H1 (cell line): ENCODE measurements at regions of chr2 and their contacts with region 1.

Region 1: DNA sequence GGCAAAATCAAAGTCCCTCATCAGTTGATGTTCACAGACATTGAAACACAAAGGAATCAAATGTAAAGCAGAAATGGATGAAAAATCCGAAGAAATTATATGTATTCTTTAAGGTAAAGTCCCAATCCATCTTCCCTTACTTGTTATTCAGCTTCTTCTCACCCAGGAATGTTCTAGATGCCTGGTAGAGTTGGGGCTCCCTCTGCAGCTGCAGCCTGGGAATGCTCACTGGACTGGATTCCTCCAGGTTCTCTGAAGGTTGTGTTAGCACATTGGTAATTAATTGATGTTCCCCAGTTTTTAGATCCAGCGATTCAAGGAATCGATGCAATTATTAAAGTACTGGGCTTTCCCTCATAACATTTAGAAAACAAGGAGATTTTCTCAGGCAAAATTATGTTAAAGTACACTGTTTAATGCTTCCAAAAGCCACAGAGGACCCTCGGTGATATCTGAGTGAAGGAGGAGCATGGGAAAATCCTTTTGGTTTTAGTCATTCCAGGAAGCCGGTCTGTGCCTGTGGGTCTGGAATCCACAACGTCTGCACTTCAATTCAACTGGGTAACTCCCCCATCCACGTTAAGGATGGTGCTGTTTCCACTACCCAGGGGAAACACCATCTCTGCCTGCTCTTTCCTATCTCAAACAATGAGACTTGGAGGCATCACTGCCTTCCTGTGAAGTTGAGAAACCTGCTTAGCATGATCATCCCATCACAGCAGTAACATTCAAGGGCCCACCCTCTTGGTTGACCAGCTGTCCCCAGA is 22.0 kb downstream of the NTSR2 start:
- DNase-seq: no peak
- H3K4me3 ChIP-seq: no peak overlapping the region
- H3K27ac ChIP-seq: no peak overlapping the region
- H3K4me1 ChIP-seq: no peaks in the 10 kb centered on the region
- H3K27me3 ChIP-seq: no peaks in the 10 kb centered on the region
- CTCF ChIP-seq: peak; percentile 38 to 55 (median 39)
- EP300 ChIP-seq: no peak
- POLR2A ChIP-seq: no peak
- RAD21 ChIP-seq: peak; percentile 60 to 69

Region 2: GRCh38 chr2:11631462-11631861 is 16.6 kb before region 1 on chr2:
- CTCF ChIA-PET with region 1: interaction called, 11 read pairs
- POLR2A ChIA-PET with region 1: no interaction called
- DNase-seq: no peak
- H3K4me3 ChIP-seq: no peak overlapping the region
- H3K27ac ChIP-seq: no peak overlapping the region
- H3K4me1 ChIP-seq: no peaks in the 10 kb centered on the region
- H3K27me3 ChIP-seq: no peaks in the 10 kb centered on the region
- CTCF ChIP-seq: no peak
- EP300 ChIP-seq: no peak
- POLR2A ChIP-seq: no peak
- RAD21 ChIP-seq: no peak

Region 3: GRCh38 chr2:11663427-11663826 is 15.4 kb after region 1 on chr2:
- CTCF ChIA-PET with region 1: interaction called, 13 read pairs
- POLR2A ChIA-PET with region 1: no interaction called
- DNase-seq: no peak
- H3K4me3 ChIP-seq: no peak overlapping the region
- H3K27ac ChIP-seq: no peak overlapping the region
- H3K4me1 ChIP-seq: no peaks in the 10 kb centered on the region
- H3K27me3 ChIP-seq: peaks cover 0 to 4% (median 2%) of the 10 kb centered on the region in 4 experiments; a peak in 6 of 7 replicates
- CTCF ChIP-seq: no peak
- EP300 ChIP-seq: no peak
- POLR2A ChIP-seq: no peak
- RAD21 ChIP-seq: no peak

Region 4: DNA sequence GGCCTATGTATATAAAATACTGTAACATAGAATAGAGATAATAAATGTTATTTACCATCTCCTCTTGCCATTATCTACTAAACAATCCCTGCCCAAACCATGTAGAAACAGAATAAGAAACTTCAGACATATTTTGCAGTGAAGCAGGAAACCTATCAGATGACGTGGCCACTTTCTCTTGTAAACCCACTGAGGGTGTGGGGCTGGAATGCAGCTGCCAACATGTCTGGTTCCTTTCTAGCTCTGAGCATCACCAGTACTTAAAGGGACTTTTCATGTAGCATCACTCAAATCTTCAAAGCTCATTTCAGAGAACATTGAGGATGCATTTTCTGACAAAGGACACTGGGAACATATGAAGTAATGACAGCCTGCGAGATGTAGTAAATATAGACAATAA is 350.2 kb after region 1 on chr2:
- CTCF ChIA-PET with region 1: no interaction called
- POLR2A ChIA-PET with region 1: no interaction called
- DNase-seq: no peak
- H3K4me3 ChIP-seq: no peak overlapping the region
- H3K27ac ChIP-seq: no peak overlapping the region
- H3K4me1 ChIP-seq: no peaks in the 10 kb centered on the region
- H3K27me3 ChIP-seq: peaks cover 0 to 1% (median 0%) of the 10 kb centered on the region in 4 experiments; a peak in 1 of 7 replicates
- CTCF ChIP-seq: no peak
- EP300 ChIP-seq: no peak
- POLR2A ChIP-seq: no peak
- RAD21 ChIP-seq: no peak